Mammary epithelial cell (primary cell): ENCODE measurements at regions of chr9 and their contacts with region 1.

Region 1: GRCh38 chr9:106119176-106119575 is 424.8 kb downstream of the TMEM38B start:
- DNase-seq: no peak
- H3K4me3 ChIP-seq: no peak overlapping the region
- H3K27ac ChIP-seq: no peak overlapping the region
- H3K4me1 ChIP-seq: no peaks in the 10 kb centered on the region
- H3K27me3 ChIP-seq: no peaks in the 10 kb centered on the region
- CTCF ChIP-seq: no peak

Region 2: GRCh38 chr9:106207298-106207697 is 88.1 kb after region 1 on chr9:
- CTCF ChIA-PET with region 1: no interaction called
- dilution Hi-C with region 1: loop called (anchors 5 kb)
- in situ Hi-C with region 1: no loop called
- intact Hi-C with region 1: no loop called
- DNase-seq: no peak
- H3K4me3 ChIP-seq: no peak overlapping the region
- H3K27ac ChIP-seq: no peak overlapping the region
- H3K4me1 ChIP-seq: no peaks in the 10 kb centered on the region
- H3K27me3 ChIP-seq: no peaks in the 10 kb centered on the region
- CTCF ChIP-seq: no peak